K562 (cell line): ENCODE measurements at regions of chr11 and their contacts with region 1.

Region 1: GRCh38 chr11:11787305-11788062 is 54.3 kb upstream of the USP47 start:
- DNase-seq: peak; percentile 63 to 77 (median 66)
- ATAC-seq: peak; percentile 97
- H3K4me3 ChIP-seq: no peak overlapping the region
- H3K27ac ChIP-seq: no peak overlapping the region
- H3K4me1 ChIP-seq: no peaks in the 10 kb centered on the region
- H3K27me3 ChIP-seq: peaks cover 0 to 3% of the 10 kb centered on the region in 2 experiments; a peak in 1 of 5 replicates
- CTCF ChIP-seq: peak; percentile 81 to 95 (median 83)
- EP300 ChIP-seq: no peak
- POLR2A ChIP-seq: no peak
- RAD21 ChIP-seq: peak; percentile 86 to 90

Region 2: DNA sequence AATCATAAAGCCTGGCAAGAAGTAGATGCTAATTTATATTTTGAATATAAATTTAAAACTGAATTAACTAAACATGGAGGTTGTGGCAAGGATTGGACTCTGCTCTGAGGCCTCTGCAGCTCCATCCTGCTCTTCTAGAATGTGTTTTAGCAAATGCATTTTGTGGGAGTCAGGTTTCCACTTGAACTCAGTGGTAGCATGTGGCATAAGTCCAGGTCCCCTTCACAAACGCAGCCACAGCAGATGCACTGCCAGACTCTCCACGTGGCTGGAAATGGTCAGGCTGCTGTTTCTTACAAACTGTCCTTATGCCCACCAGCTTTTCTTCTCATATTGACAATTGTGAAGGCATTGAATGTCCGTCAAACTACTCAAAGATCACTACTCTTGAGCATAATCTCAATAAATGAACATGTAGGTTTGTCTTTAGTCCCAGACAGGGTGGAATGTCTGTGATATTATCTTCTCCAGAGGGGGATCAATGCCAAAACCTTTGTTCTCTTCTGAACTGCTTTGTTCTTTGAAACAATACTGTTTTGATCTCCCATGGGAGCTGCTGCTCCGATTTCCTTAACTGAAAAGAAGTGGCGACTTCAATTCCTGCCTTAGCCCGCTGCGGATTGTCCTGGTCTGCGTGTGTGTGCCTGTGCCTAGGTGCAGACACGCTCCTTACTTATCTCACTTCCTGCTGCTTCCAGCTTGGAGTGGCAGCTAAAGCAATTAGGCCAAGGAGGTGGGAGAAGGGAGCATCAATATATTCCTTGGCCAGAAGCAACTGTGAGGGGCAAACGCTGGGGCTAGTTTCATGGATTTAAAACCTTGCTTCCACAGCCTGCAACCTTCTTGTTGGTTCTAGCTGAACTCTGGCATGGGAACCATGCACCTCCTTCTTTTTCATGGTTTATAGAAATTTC is 1003.0 kb before region 1 on chr11:
- CTCF ChIA-PET with region 1: no interaction called
- POLR2A ChIA-PET with region 1: no interaction called
- in situ Hi-C with region 1: loop called (anchors 10 kb)
- intact Hi-C with region 1: no loop called
- DNase-seq: no peak
- ATAC-seq: peak; percentile 45
- H3K4me3 ChIP-seq: no peak overlapping the region
- H3K27ac ChIP-seq: no peak overlapping the region
- H3K4me1 ChIP-seq: no peaks in the 10 kb centered on the region
- H3K27me3 ChIP-seq: no peaks in the 10 kb centered on the region
- CTCF ChIP-seq: no peak
- EP300 ChIP-seq: no peak
- POLR2A ChIP-seq: no peak
- RAD21 ChIP-seq: no peak

Region 3: DNA sequence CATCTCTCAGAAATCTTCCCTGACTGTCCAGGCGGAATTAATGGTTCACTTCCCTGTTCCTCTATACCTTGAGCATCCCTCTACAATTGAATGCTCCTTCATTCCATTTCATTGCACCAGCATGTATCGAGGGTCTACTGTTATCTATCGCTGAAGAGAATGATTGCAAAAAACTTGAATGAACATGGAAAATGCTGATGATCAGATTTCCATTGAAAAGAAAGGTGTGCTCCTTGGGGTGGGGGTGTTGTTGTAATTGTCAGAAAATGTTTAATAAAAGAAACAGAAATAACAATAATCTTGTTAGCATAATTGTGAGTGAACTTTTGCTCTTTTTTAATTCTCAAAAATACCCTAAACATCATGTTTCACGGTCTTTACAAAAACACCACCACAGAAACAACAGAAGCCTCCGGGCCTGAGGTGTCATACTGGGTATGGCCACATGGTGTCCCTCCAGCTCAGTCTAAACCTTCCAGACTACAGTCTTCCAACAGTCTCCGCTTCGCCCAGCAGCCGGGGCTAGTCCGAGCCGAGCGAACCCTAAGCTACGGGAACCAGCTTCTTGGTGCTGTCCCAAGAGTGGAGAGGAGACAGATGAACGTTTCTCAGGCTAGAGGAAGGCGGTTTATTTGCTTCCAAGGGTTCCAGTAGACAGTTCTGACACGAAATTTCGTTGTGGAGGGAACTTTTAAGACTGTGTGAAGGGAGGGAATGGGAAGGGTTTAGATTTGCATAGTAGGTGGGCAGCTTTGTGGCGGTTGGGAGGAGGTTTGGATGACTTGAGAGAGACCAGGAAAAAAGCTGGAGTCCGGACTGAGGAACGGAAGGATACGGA is 853.8 kb before region 1 on chr11:
- CTCF ChIA-PET with region 1: no interaction called
- POLR2A ChIA-PET with region 1: no interaction called
- in situ Hi-C with region 1: no loop called
- intact Hi-C with region 1: loop called (anchors 5 kb)
- DNase-seq: peak; percentile 81 to 93 (median 84)
- ATAC-seq: peak; percentile 97
- H3K4me3 ChIP-seq: peak overlapping the region; percentile 36
- H3K27ac ChIP-seq: peak overlapping the region; percentile 41; the same call in 2 of the 3 replicates
- H3K4me1 ChIP-seq: peaks cover 9 to 26% of the 10 kb centered on the region in 2 experiments; a peak in 4 of 5 replicates
- H3K27me3 ChIP-seq: no peaks in the 10 kb centered on the region
- CTCF ChIP-seq: peak; percentile 97 to 98 (median 98)
- EP300 ChIP-seq: no peak; the same call in 1 of the 2 replicates
- POLR2A ChIP-seq: 0 out of 2 replicates have a peak, but pooled peaks have one; percentile 45
- RAD21 ChIP-seq: peak; percentile 95 to 96

Region 4: DNA sequence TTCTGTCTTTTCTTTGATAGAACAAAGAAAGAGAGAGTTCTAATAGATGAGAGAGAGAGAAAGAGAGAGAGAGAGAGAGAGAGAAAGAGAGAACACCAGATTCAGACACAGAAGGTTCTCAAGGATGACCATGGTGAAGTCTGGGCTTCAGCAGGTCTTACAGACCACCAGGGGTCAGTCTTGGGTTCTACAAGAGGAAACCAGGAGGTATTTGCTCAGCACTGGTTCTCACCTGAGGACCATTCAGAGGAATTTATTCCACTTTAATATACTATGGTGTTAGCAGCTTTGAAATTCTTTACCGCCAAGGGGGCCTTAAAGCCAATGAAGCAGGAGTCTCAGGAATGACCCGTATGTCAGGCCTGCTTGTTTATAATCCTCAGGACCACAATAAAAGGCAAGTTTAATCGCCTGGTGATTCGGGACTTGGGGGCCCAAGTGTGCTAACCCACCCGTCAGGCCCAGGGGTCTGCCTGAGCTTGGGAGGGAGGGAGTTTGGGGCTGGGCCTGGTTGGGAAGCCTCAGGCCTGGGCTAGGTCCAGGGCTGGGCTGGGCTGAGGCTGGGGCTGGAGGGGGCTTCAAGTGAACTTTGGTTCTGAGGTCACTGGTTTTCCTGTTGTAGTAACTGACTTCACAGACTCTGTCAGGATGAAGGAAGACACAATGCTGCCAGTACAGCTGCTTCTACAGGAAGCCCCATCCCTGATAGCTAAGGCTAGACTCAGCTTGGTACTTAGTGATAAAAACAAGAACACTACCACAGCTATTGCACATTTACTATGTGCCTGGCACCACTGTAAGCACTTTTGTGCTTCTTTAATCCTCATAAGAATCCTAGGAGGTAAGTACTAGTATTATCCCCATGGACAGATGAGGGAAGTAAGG is 750.4 kb before region 1 on chr11:
- CTCF ChIA-PET with region 1: interaction called, 11 read pairs
- POLR2A ChIA-PET with region 1: no interaction called
- in situ Hi-C with region 1: loop called (anchors 5 kb)
- intact Hi-C with region 1: no loop called
- DNase-seq: peak; percentile 38 to 69 (median 41)
- ATAC-seq: peak; percentile 92
- H3K4me3 ChIP-seq: no peak overlapping the region
- H3K27ac ChIP-seq: no peak overlapping the region
- H3K4me1 ChIP-seq: no peaks in the 10 kb centered on the region
- H3K27me3 ChIP-seq: peaks cover 3 to 30% of the 10 kb centered on the region in 2 experiments; a peak in 4 of 5 replicates
- CTCF ChIP-seq: peak; percentile 65 to 77 (median 72)
- EP300 ChIP-seq: no peak
- POLR2A ChIP-seq: no peak
- RAD21 ChIP-seq: peak; percentile 46 to 80; a peak in 3 of 4 replicates

Region 5: DNA sequence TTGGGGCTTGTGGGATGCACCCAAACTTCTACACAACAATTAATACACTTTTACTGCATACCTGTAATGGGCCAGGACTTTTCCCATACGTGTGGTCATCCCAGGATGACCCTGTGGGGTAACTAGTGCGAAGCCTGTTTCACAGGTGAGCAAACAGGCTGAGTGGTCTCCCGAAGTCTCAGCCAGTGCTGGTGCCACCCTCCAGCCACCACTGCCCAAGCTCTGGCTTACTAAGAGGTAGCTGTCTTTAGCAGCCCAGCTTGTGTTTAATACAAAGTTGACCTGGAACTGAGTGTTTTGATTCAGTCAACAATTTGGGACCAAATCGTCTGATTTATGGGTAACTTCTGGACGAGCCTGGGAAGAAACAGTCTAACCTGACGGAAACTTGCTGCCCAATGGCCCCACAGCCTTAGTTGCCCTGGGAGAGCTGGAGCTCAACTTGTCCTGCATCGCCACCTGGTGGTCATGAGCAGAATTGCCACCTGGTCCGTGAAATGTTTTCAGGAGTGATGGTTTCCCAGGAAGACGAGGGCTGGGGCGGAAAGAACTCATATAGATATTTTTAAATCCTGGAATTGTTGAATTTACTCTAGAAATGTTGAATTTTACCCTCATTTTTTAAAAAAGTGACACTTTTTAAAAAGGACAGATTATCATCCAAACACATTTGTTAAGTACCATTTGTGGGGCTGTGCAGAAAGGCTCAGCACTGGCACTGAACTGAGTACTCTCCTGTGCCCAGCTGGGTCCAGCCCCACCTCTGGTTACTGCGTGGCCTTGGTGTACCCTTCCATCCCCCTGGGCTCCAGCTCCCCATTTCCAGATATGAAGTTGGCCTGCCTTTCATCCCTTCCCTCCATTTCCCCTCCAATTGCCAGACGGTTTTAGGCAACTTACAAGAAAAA is 494.3 kb after region 1 on chr11:
- CTCF ChIA-PET with region 1: no interaction called
- POLR2A ChIA-PET with region 1: no interaction called
- in situ Hi-C with region 1: no loop called
- intact Hi-C with region 1: loop called (anchors 5 kb)
- DNase-seq: peak; percentile 86 to 88 (median 87)
- ATAC-seq: peak; percentile 89
- H3K4me3 ChIP-seq: no peak overlapping the region
- H3K27ac ChIP-seq: no peak overlapping the region
- H3K4me1 ChIP-seq: peaks cover 8 to 13% of the 10 kb centered on the region in 2 experiments; a peak in 4 of 5 replicates
- H3K27me3 ChIP-seq: no peaks in the 10 kb centered on the region; a peak in 1 of 5 replicates
- CTCF ChIP-seq: peak; percentile 92 to 98 (median 98)
- EP300 ChIP-seq: no peak
- POLR2A ChIP-seq: no peak
- RAD21 ChIP-seq: peak; percentile 99